Common myeloid progenitor, CD34-positive (primary cell): ENCODE measurements at regions of chr11 and their contacts with region 1.

Region 1: DNA sequence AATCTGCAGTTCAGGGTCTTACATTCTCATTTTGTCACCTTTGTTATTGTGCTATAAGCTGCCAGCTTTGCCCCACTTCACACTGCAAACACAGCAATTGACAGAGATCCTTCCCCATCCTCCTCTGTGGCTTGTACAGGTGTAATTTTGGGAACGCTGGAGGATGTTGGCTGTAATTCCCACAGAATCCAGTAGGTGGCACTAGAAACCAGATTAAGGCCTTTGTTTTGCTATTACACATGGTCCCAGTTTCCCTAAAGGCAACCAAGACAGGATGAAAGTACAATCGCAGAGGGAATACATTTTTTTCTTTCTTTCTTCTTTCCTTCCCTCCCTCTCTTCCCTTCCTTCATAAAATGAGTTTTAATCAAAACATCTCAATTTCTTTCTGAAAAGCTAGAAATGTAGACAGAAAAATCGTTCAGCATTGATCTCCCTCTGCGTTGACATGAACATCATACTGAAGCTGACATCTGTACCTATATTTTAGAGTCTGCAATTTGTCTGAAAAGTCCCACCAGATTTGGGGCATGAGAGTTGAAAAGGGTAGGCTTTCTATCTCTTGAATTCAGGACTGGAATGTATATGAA is 21.3 kb upstream of the NELL1 start:
- DNase-seq: peak; percentile 24 to 50 (median 28)
- H3K4me3 ChIP-seq: no peak overlapping the region
- H3K27ac ChIP-seq: no peak overlapping the region
- H3K4me1 ChIP-seq: no peaks in the 10 kb centered on the region
- H3K27me3 ChIP-seq: peaks cover 0 to 6% (median 2%) of the 10 kb centered on the region in 5 experiments

Region 2: GRCh38 chr11:20723366-20723765 is 75.3 kb after region 1 on chr11:
- CTCF ChIA-PET with region 1: no interaction called
- POLR2A ChIA-PET with region 1: no interaction called
- DNase-seq: no peak
- H3K4me3 ChIP-seq: no peak overlapping the region
- H3K27ac ChIP-seq: no peak overlapping the region
- H3K4me1 ChIP-seq: no peaks in the 10 kb centered on the region
- H3K27me3 ChIP-seq: no peaks in the 10 kb centered on the region

Region 3: GRCh38 chr11:22130462-22131053 is 1482.5 kb after region 1 on chr11:
- CTCF ChIA-PET with region 1: interaction called, 12 read pairs
- POLR2A ChIA-PET with region 1: no interaction called
- DNase-seq: peak in 2 of 3 donors; percentile 20 to 30
- H3K4me3 ChIP-seq: no peak overlapping the region
- H3K27ac ChIP-seq: no peak overlapping the region
- H3K4me1 ChIP-seq: no peaks in the 10 kb centered on the region
- H3K27me3 ChIP-seq: no peaks in the 10 kb centered on the region